OCI-LY7 (cell line): ENCODE measurements at regions of chr16 and their contacts with region 1.

Region 1: GRCh38 chr16:18841833-18842525 is 40.6 kb upstream of the ARL6IP1 start:
- DNase-seq: no peak
- H3K4me3 ChIP-seq: no peak overlapping the region
- H3K27ac ChIP-seq: no peak overlapping the region
- H3K4me1 ChIP-seq: no peaks in the 10 kb centered on the region
- CTCF ChIP-seq: no peak

Region 2: DNA sequence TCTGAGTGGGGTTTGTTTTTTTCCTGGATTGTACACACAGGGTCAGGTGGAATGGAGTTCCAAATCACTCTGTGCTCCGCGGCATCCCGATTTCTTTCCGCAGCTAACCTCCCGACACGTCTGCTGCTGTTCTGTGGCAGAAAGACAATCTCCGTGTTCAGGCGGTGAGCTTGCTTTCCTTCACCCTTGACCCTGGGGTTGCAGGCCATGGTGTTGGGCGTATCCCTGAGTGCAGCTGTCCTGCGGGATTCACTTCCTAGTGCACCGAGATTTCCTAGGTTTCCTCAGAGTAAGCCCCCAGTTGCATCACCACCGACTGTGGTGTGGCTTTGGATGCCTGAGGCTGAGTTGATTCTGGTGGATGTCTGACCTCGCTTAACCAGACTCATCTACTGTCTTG is 32.8 kb before region 1 on chr16:
- CTCF ChIA-PET with region 1: no interaction called
- POLR2A ChIA-PET with region 1: interaction called, 3 read pairs
- intact Hi-C with region 1: loop called (anchors 5 kb)
- DNase-seq: no peak
- H3K4me3 ChIP-seq: no peak overlapping the region
- H3K27ac ChIP-seq: no peak overlapping the region
- H3K4me1 ChIP-seq: peaks cover 22% of the 10 kb centered on the region
- CTCF ChIP-seq: no peak

Region 3: GRCh38 chr16:18829251-18829650 is 12.7 kb before region 1 on chr16:
- CTCF ChIA-PET with region 1: no interaction called
- POLR2A ChIA-PET with region 1: no interaction called
- intact Hi-C with region 1: no loop called
- DNase-seq: no peak
- H3K4me3 ChIP-seq: no peak overlapping the region
- H3K27ac ChIP-seq: no peak overlapping the region
- H3K4me1 ChIP-seq: no peaks in the 10 kb centered on the region
- CTCF ChIP-seq: no peak